ENCODE measurements at regions of chr11 and their contacts with region 1.

Region 1: GRCh38 chr11:13462901-13463778 is at the start of gene BTBD10:
- H3K4me3 ChIP-seq: peak within 1 kb of the TSS; percentile 99
- H3K27ac ChIP-seq: peak within 1 kb of the TSS; percentile 38
- H3K4me1 ChIP-seq: no peaks in the 10 kb centered on the region
- CTCF ChIP-seq: no peak

Region 2: GRCh38 chr11:13440100-13440855 is 22.9 kb before region 1 on chr11:
- CTCF ChIA-PET with region 1: interaction called, 3 read pairs
- POLR2A ChIA-PET with region 1: interaction called, 10 read pairs
- H3K4me3 ChIP-seq: peak overlapping the region; percentile 37
- H3K27ac ChIP-seq: no peak overlapping the region
- H3K4me1 ChIP-seq: no peaks in the 10 kb centered on the region
- CTCF ChIP-seq: no peak

Region 3: GRCh38 chr11:13480195-13480594 is 17.1 kb after region 1 on chr11:
- CTCF ChIA-PET with region 1: interaction called, 15 read pairs
- POLR2A ChIA-PET with region 1: interaction called, 5 read pairs
- H3K4me3 ChIP-seq: no peak overlapping the region
- H3K27ac ChIP-seq: no peak overlapping the region
- H3K4me1 ChIP-seq: no peaks in the 10 kb centered on the region
- CTCF ChIP-seq: no peak

Measured in HEK293 (cell line).